Activated naive CD4-positive, alpha-beta T cell treated with anti-CD3 and anti-CD28 coated beads for 36 hours (primary cell): ENCODE measurements at regions of chr9 and their contacts with region 1.

Region 1: GRCh38 chr9:127199001-127199791 is 65.4 kb upstream of the GARNL3 start:
- DNase-seq: peak; percentile 87
- H3K4me3 Mint-ChIP-seq: no peak overlapping the region
- H3K27ac Mint-ChIP-seq: no peak overlapping the region
- H3K4me1 Mint-ChIP-seq: peaks cover 3% of the 10 kb centered on the region
- H3K27me3 Mint-ChIP-seq: peaks cover 7% of the 10 kb centered on the region

Region 2: GRCh38 chr9:126939821-126940221 is 259.4 kb before region 1 on chr9:
- CTCF ChIA-PET with region 1: interaction called, 36 read pairs
- intact Hi-C with region 1: loop called (anchors 1 kb)
- DNase-seq: no peak
- H3K4me3 Mint-ChIP-seq: no peak overlapping the region
- H3K27ac Mint-ChIP-seq: no peak overlapping the region
- H3K4me1 Mint-ChIP-seq: peaks cover 4% of the 10 kb centered on the region
- H3K27me3 Mint-ChIP-seq: peaks cover 22% of the 10 kb centered on the region

Region 3: DNA sequence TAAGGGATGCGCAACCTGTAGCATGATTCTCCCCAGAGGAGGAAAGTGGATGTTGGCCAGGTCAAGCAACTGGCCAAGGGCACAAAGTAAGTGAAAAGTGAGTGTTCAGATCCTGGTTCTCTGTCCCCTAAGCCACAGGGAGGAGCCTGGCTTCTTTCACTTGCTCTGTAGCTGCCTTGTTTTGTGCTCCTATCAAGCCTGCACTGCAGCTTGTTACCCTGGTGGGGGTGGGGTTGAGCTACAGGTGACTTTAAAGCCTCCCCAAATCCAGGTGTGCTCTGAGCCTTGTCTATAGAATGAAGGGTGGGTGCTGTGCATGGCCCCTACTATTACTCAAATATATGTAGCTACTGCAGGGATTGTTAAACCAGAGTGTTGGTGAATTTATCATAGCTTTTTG is 251.7 kb before region 1 on chr9:
- CTCF ChIA-PET with region 1: interaction called, 36 read pairs
- intact Hi-C with region 1: loop called (anchors 1 kb)
- DNase-seq: peak; percentile 29
- H3K4me3 Mint-ChIP-seq: no peak overlapping the region
- H3K27ac Mint-ChIP-seq: no peak overlapping the region
- H3K4me1 Mint-ChIP-seq: no peaks in the 10 kb centered on the region
- H3K27me3 Mint-ChIP-seq: peaks cover 16% of the 10 kb centered on the region

Region 4: DNA sequence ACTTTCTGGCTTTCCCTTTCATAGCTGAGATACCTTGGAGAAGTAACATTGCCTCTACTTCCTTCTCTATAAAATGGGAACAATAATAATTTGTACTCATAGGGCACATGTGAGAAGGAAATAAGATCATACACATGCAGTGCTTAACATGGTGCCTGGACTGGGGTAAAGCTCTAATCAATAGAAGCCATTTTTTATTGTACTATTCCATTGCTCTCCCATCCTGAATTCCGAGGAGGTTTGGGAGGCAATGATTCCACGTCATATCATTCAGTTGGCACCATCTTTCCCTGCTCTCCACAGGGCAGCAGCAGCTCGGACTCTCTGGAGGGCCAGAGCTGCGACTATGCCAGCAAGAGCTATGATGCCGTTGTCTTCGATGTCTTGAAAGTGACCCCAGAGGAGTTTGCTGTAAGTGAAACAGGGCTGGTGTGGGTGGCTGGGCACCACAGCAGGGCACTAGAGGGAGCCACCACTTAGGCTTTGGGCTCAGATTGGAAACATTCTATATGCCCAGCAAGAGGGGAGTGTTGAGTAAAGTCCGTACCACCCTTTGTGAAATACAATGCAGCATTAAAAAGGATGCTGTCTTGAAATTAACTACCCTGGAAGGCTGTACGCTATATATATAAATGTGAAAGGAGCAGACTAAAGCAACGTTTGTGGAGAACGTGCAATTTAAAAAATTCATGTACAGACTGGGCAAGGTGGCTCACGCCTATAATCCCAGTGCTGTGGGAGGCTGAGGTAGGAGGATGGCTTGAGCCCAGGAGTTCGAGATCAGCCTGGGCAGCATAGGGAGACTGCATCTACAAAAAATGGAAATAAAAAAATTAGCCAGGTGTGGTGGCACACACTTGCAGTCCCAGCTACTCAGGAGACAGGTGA is 233.4 kb before region 1 on chr9:
- CTCF ChIA-PET with region 1: interaction called, 25 read pairs
- intact Hi-C with region 1: loop called (anchors 1 kb)
- DNase-seq: peak; percentile 60
- H3K4me3 Mint-ChIP-seq: no peak overlapping the region
- H3K27ac Mint-ChIP-seq: no peak overlapping the region
- H3K4me1 Mint-ChIP-seq: no peaks in the 10 kb centered on the region
- H3K27me3 Mint-ChIP-seq: peaks cover 19% of the 10 kb centered on the region

Region 5: DNA sequence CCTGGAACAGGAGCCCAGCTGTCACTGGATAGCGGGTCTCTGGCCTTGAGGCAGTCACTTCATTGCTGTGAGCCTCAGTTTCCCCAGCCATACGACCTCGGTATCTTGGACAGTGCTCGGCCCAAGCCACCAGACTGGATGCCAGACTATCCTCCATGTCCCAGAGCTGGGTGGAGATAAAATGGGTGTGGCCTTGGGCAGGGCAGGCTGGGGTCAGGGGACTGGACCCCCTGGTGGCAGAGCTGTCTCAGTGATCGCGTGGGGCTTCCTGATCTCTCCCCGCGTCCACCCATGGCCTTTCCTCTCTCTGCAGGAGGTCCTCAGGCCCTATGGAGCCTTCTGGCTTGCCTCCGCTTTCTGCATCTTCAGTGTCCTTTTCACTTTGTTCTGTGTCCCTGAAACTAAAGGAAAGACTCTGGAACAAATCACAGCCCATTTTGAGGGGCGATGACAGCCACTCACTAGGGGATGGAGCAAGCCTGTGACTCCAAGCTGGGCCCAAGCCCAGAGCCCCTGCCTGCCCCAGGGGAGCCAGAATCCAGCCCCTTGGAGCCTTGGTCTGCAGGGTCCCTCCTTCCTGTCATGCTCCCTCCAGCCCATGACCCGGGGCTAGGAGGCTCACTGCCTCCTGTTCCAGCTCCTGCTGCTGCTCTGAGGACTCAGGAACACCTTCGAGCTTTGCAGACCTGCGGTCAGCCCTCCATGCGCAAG is 207.8 kb after region 1 on chr9:
- CTCF ChIA-PET with region 1: no interaction called
- intact Hi-C with region 1: no loop called
- DNase-seq: no peak
- H3K4me3 Mint-ChIP-seq: no peak overlapping the region
- H3K27ac Mint-ChIP-seq: no peak overlapping the region
- H3K4me1 Mint-ChIP-seq: no peaks in the 10 kb centered on the region
- H3K27me3 Mint-ChIP-seq: peaks cover 26% of the 10 kb centered on the region